Activated CD4-positive, alpha-beta T cell treated with anti-CD3 and anti-CD28 coated beads for 36 hours (primary cell): ENCODE measurements at regions of chr3 and their contacts with region 1.

Region 1: DNA sequence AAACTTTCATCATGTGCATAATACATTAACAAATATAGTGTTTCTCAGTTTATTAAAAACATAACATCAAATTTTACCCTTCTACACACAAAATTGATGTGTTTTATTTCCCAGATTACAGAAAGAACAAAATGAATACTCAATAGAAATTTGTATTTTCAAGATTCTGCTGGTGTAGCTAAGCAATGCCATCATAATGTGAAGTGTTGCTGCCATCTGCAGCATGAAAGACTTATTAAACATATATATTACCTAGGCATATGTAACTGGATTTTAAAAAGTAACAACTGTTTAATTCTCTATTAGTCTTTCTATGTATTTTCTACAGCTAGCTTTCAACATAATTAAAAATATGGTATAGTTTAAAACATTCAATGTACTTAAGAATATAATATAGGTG is 27.5 kb downstream of the PLSCR5 start:
- DNase-seq: peak; percentile 40
- ATAC-seq: no peak
- H3K4me3 Mint-ChIP-seq: no peak overlapping the region
- H3K27ac Mint-ChIP-seq: no peak overlapping the region
- H3K4me1 Mint-ChIP-seq: no peaks in the 10 kb centered on the region
- H3K27me3 Mint-ChIP-seq: no peaks in the 10 kb centered on the region

Region 2: GRCh38 chr3:146189519-146190173 is 388.0 kb before region 1 on chr3:
- CTCF ChIA-PET with region 1: interaction called, 30 read pairs
- POLR2A ChIA-PET with region 1: no interaction called
- intact Hi-C with region 1: loop called (anchors 1 kb)
- DNase-seq: no peak
- ATAC-seq: peak; percentile 76
- H3K4me3 Mint-ChIP-seq: no peak overlapping the region
- H3K27ac Mint-ChIP-seq: no peak overlapping the region
- H3K4me1 Mint-ChIP-seq: no peaks in the 10 kb centered on the region
- H3K27me3 Mint-ChIP-seq: peaks cover 10% of the 10 kb centered on the region

Region 3: DNA sequence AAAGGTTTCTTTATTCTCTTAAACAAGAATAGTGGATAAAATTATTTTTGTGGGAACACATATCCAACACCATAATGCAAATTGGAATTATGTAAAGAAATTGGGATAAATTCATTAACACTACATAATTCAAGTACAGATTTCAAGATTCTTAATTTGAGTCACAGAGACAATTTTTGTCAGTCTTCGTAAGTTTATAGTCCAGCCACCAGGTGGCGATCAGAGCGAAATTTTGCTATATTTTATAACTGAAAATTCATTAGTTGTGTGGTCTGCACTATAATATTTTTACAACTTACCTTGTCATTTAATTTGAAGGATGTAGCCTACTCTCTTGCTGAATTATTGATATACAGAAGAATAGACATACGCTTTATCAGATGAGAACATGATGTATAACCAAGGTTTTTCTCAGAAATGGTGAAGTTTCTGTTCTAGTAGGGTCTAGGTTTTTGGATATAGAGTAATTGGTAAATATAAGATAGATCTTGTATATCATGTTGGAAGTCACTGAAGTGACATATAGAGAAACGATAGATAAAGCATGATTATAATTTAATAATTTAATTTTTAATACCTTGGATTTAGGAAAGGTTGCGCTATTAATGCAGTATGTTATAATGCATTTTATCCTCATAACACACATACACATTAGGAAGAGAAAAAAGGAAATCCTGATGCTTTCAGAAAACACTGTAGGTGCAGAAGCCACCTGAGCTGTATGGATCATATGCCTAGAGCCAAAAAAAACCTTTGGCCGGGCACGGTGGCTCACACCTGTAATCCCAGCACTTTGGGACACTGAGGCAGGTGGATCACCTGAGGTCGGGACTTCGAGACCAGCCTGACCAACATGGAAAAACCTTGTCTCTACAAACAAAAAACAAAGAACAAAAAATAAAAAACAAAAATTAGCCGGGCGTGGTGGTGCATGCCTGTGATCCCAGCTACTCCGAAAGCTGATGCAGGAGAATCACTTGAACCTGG is 358.5 kb before region 1 on chr3:
- CTCF ChIA-PET with region 1: interaction called, 8 read pairs
- POLR2A ChIA-PET with region 1: no interaction called
- intact Hi-C with region 1: loop called (anchors 1 kb)
- DNase-seq: peak; percentile 58
- ATAC-seq: no peak
- H3K4me3 Mint-ChIP-seq: no peak overlapping the region
- H3K27ac Mint-ChIP-seq: no peak overlapping the region
- H3K4me1 Mint-ChIP-seq: no peaks in the 10 kb centered on the region
- H3K27me3 Mint-ChIP-seq: peaks cover 8% of the 10 kb centered on the region

Region 4: DNA sequence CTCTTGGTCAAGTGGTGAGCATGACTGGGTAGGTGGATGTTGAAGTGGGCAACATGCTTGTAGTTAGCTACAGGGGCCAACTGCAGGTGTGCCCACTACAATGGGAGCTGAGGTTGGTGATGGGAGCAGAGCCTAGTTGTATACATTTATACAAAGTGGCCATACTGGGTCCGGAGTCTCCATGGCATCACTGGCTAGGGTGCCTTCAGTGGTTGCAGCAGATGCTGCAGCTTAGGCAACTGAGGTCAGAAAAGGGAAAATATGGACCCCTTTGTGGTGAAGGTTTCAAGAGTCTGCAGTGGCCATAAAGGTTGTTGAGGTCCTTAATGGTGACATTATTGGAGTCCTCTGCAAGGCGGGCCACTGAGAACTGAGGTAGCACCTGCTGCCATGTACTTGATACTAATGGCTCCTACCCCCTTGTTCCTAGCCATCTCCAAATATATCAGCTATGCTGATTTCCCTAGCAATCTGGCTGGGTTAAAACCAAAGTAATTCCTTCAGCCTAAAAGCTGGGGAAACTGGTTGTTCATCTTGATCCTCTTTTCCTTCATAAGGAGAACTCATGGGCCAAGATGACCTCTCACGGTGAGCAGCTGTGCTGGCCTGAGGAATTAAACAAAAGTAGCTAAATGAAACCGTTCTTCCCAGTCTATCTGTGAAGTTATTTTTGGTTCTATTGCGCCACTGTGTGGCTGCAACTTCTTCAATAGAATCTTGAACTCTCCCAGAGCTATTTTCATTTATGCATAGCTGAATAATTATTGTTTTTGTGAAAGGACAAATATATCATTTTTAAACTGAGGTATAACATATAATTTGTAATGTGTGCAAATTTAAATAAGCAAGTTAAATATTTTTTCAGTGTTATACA is 250.8 kb before region 1 on chr3:
- CTCF ChIA-PET with region 1: interaction called, 5 read pairs
- POLR2A ChIA-PET with region 1: no interaction called
- intact Hi-C with region 1: loop called (anchors 5 to 10 kb)
- DNase-seq: no peak
- ATAC-seq: no peak
- H3K4me3 Mint-ChIP-seq: no peak overlapping the region
- H3K27ac Mint-ChIP-seq: no peak overlapping the region
- H3K4me1 Mint-ChIP-seq: no peaks in the 10 kb centered on the region
- H3K27me3 Mint-ChIP-seq: peaks cover 4% of the 10 kb centered on the region

Region 5: GRCh38 chr3:146334151-146334550 is 243.5 kb before region 1 on chr3:
- CTCF ChIA-PET with region 1: no interaction called
- POLR2A ChIA-PET with region 1: no interaction called
- intact Hi-C with region 1: loop called (anchors 5 to 10 kb)
- DNase-seq: no peak
- ATAC-seq: no peak
- H3K4me3 Mint-ChIP-seq: no peak overlapping the region
- H3K27ac Mint-ChIP-seq: no peak overlapping the region
- H3K4me1 Mint-ChIP-seq: no peaks in the 10 kb centered on the region
- H3K27me3 Mint-ChIP-seq: no peaks in the 10 kb centered on the region

Region 6: DNA sequence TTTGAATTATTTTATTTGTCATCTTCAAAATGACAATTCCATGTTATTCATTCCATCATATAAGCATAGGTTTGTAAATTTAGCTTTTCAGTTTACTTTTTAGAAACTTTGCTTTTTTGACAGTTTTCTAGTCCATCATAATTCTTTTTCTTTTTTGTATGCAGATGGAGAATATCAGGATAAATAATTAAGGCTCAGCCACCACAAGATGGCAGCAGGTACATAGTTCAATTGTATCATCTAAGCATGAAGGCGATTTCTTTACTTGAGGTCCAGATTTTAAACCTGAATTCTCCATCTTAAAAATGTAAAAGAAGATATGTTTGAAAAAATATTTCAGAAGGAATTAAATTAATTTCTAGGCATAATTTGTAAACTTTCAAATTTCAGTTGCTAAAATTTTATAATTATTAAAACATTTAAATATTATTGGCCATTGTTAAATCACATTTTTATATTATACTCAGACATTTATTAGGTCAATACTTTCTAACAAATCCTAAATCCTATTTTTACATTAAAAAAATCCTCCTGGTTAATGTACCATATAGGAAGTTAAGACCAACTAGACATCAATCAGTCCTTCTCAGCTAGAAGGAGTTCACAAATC is 12.3 kb after region 1 on chr3:
- CTCF ChIA-PET with region 1: interaction called, 11 read pairs
- POLR2A ChIA-PET with region 1: no interaction called
- intact Hi-C with region 1: no loop called
- DNase-seq: peak; percentile 35
- ATAC-seq: no peak
- H3K4me3 Mint-ChIP-seq: no peak overlapping the region
- H3K27ac Mint-ChIP-seq: no peak overlapping the region
- H3K4me1 Mint-ChIP-seq: no peaks in the 10 kb centered on the region
- H3K27me3 Mint-ChIP-seq: peaks cover 9% of the 10 kb centered on the region